Gastrocnemius medialis (tissue), 4 donors: ENCODE measurements at regions of chr9 and their contacts with region 1.

Region 1: GRCh38 chr9:14309403-14309802 is 4.5 kb downstream of the NFIB start:
- DNase-seq: no peak
- ATAC-seq: no peak
- H3K4me3 ChIP-seq: peak overlapping the region; percentile 81 to 91 (median 86)
- H3K27ac ChIP-seq: peak overlapping the region; percentile 92 to 99 (median 98)
- H3K4me1 ChIP-seq: peaks cover 45 to 56% of the 10 kb centered on the region in 2 donors
- H3K27me3 ChIP-seq: no peaks in the 10 kb centered on the region
- CTCF ChIP-seq: no peak
- POLR2A ChIP-seq: no peak

Region 2: GRCh38 chr9:14198841-14199455 is 110.5 kb before region 1 on chr9:
- in situ Hi-C with region 1: no loop called
- intact Hi-C with region 1: loop called (anchors 5 kb)
- DNase-seq: peak; percentile 78 to 87
- ATAC-seq: peak; percentile 85 to 88
- H3K4me3 ChIP-seq: peak overlapping the region; percentile 18 to 25 (median 22)
- H3K27ac ChIP-seq: peak overlapping the region; percentile 71 to 79 (median 79)
- H3K4me1 ChIP-seq: peaks cover 52 to 59% of the 10 kb centered on the region in 2 donors
- H3K27me3 ChIP-seq: no peaks in the 10 kb centered on the region
- CTCF ChIP-seq: no peak
- POLR2A ChIP-seq: no peak

Region 3: GRCh38 chr9:14706530-14707140 is 397.2 kb after region 1 on chr9:
- in situ Hi-C with region 1: no loop called
- intact Hi-C with region 1: no loop called
- DNase-seq: no peak
- ATAC-seq: no peak
- H3K4me3 ChIP-seq: no peak overlapping the region
- H3K27ac ChIP-seq: no peak overlapping the region
- H3K4me1 ChIP-seq: no peaks in the 10 kb centered on the region
- H3K27me3 ChIP-seq: no peaks in the 10 kb centered on the region
- CTCF ChIP-seq: no peak
- POLR2A ChIP-seq: no peak